ENCODE measurements at regions of chr6 and their contacts with region 1.

Region 1: GRCh38 chr6:235763-236360 is 56.4 kb upstream of the DUSP22 start:
- DNase-seq: no peak
- H3K4me3 ChIP-seq: peak overlapping the region in 3 of 4 donors; percentile 9 to 34 (median 24)
- H3K27ac ChIP-seq: peak overlapping the region; percentile 25 to 71 (median 64)
- H3K4me1 ChIP-seq: peaks cover 0 to 16% (median 0%) of the 10 kb centered on the region in 4 donors
- H3K27me3 ChIP-seq: no peaks in the 10 kb centered on the region
- CTCF ChIP-seq: no peak
- EP300 ChIP-seq: no peak
- POLR2A ChIP-seq: no peak

Region 2: GRCh38 chr6:279341-280029 is 43.6 kb after region 1 on chr6:
- in situ Hi-C with region 1: no loop called
- intact Hi-C with region 1: loop called (anchors 1 kb)
- DNase-seq: no peak
- H3K4me3 ChIP-seq: no peak overlapping the region
- H3K27ac ChIP-seq: no peak overlapping the region
- H3K4me1 ChIP-seq: no peaks in the 10 kb centered on the region
- H3K27me3 ChIP-seq: no peaks in the 10 kb centered on the region
- CTCF ChIP-seq: no peak
- EP300 ChIP-seq: no peak
- POLR2A ChIP-seq: no peak

Region 3: DNA sequence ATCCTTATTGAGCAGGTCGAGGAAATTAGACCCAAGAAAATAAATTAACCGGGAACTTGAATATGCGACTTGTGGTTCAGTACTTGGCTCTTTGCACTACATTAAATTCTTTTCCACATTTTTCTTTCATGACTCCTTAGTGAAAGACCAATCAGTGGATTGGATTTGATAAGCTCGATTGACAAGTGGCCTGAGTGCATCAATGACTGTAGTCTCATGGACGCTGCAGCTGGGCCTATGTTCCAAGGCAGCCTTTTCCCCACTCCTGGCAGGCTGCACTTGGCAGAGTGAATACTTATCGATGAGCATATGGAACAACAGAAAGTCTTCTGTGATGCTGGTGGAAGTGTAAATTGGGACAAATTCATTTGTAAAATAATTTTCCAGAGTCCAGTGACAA is 667.9 kb after region 1 on chr6:
- in situ Hi-C with region 1: no loop called
- intact Hi-C with region 1: no loop called
- DNase-seq: no peak
- H3K4me3 ChIP-seq: no peak overlapping the region
- H3K27ac ChIP-seq: no peak overlapping the region
- H3K4me1 ChIP-seq: peaks cover 0 to 12% (median 2%) of the 10 kb centered on the region in 4 donors
- H3K27me3 ChIP-seq: no peaks in the 10 kb centered on the region
- CTCF ChIP-seq: no peak
- EP300 ChIP-seq: no peak
- POLR2A ChIP-seq: no peak

Measured in transverse colon (tissue), 4 donors.